ENCODE measurements at regions of chr20 and their contacts with region 1.

Region 1: GRCh38 chr20:41365777-41366598 is 630 bp downstream of the EMILIN3 start:
- DNase-seq: peak in 3 of 5 donors; percentile 6 to 26 (median 22)
- ATAC-seq: peak in 1 of 4 donors; percentile 10
- H3K4me3 ChIP-seq: peak overlapping the region in 11 of 12 donors; percentile 6 to 60 (median 49)
- H3K27ac ChIP-seq: peak overlapping the region in 4 of 12 donors; percentile 39 to 64 (median 46)
- H3K4me1 ChIP-seq: peaks cover 0 to 38% (median 9%) of the 10 kb centered on the region in 12 donors
- H3K27me3 ChIP-seq: peaks cover 0 to 31% (median 6%) of the 10 kb centered on the region in 9 donors
- CTCF ChIP-seq: no peak
- POLR2A ChIP-seq: no peak

Region 2: DNA sequence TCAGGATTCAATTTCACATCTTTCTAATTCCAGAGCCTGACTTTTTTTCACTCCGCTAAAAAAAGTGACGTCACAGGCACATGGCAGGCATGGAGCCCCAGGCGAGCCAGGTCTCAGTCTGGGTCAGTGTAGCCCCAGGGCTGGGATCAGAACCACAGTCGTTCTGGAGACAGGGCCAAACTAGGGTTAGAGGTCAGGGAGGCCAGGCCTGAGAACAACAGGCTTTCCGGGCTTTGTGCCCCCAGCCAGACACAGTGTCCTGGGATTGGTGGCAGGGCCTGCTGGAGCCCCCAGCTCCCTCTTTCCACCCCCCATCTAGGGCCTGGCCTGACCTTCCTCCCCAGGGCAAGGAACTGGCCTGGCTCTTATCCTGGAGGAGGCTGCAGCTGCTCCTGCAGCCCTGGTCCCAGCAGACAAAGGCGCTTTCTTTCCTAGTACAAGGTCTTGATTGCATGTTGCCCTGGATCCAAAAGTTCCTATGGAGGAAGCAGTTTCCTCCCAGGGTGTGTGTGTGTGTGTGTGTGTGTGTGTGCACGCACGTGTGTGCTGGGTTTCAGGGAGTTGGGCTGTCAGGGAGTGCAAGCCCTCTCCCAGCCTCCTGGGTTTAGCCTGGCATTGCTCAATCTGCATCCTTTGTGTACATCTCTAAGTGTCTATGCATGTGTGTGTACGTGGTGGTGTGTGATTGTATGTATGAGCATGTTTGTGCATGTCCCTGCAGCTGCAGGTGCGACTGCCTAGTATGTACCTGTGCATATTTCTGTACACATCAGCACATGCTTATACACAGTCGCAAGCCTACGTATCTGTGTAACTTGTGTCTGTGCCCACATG is 27.1 kb after region 1 on chr20:
- intact Hi-C with region 1: loop called in 1 of 10 experiments (anchors 5 kb)
- DNase-seq: peak; percentile 67 to 92 (median 85)
- ATAC-seq: peak; percentile 77 to 90 (median 82)
- H3K4me3 ChIP-seq: no peak overlapping the region
- H3K27ac ChIP-seq: peak overlapping the region in 11 of 12 donors; percentile 14 to 85 (median 52)
- H3K4me1 ChIP-seq: peaks cover 0 to 59% (median 25%) of the 10 kb centered on the region in 12 donors
- H3K27me3 ChIP-seq: no peaks in the 10 kb centered on the region
- CTCF ChIP-seq: no peak
- POLR2A ChIP-seq: no peak

Region 3: GRCh38 chr20:41411391-41411847 is 45.4 kb after region 1 on chr20:
- intact Hi-C with region 1: loop called in 4 of 10 experiments (anchors 5 kb)
- DNase-seq: no peak
- ATAC-seq: peak; percentile 69 to 87 (median 78)
- H3K4me3 ChIP-seq: no peak overlapping the region
- H3K27ac ChIP-seq: peak overlapping the region; percentile 67 to 89 (median 73)
- H3K4me1 ChIP-seq: peaks cover 3 to 55% (median 28%) of the 10 kb centered on the region in 12 donors
- H3K27me3 ChIP-seq: no peaks in the 10 kb centered on the region
- CTCF ChIP-seq: peak; percentile 30 to 68 (median 58)
- POLR2A ChIP-seq: no peak

Region 4: GRCh38 chr20:41643504-41643938 is 277.5 kb after region 1 on chr20:
- intact Hi-C with region 1: no loop called
- DNase-seq: peak in 3 of 5 donors; percentile 11 to 52 (median 28)
- ATAC-seq: peak in 3 of 4 donors; percentile 49 to 80 (median 76)
- H3K4me3 ChIP-seq: no peak overlapping the region
- H3K27ac ChIP-seq: no peak overlapping the region
- H3K4me1 ChIP-seq: peaks cover 0 to 8% (median 0%) of the 10 kb centered on the region in 12 donors
- H3K27me3 ChIP-seq: no peaks in the 10 kb centered on the region
- CTCF ChIP-seq: no peak
- POLR2A ChIP-seq: no peak

Measured in heart left ventricle (tissue), 16 donors.